Ascending aorta (tissue), 2 donors: ENCODE measurements at regions of chr16 and their contacts with region 1.

Region 1: DNA sequence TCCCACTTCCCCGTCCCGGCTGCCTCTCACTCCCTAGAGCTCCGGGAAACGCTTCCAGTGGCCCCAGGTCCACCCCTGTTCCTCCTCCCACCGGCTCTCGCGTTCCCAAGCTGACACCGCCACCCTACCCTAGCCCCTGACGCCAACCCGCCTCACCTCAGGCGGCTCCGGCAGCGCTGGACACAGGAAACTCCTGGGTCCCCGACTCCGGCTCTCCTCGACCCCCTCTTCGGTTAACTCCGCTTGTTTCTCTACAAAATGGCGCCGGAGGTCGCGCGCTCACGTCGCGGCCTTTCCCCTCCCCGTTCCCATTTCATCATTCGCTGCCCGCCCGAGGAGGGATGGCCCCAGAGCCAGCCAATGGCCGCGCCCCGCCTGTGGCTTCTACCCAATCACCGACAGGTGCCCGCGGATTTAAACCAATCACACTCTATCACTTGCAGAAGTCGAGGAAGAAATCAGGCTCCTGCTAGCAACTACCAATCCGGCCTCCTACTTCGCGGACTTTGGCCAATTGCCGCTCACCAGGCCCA is at the start of gene CNOT1:
- DNase-seq: peak; percentile 98 to 100
- H3K4me3 ChIP-seq: peak within 1 kb of the TSS; percentile 78 to 86
- H3K27ac ChIP-seq: peak within 1 kb of the TSS; percentile 98
- H3K4me1 ChIP-seq: peaks cover 0 to 6% of the 10 kb centered on the region in 2 donors
- H3K27me3 ChIP-seq: no peaks in the 10 kb centered on the region
- CTCF ChIP-seq: no peak
- total RNA-seq, gene CNOT1: 324 TPM

Region 2: GRCh38 chr16:57871456-57871855 is 758.2 kb before region 1 on chr16:
- intact Hi-C with region 1: no loop called
- DNase-seq: no peak
- H3K4me3 ChIP-seq: no peak overlapping the region
- H3K27ac ChIP-seq: no peak overlapping the region
- H3K4me1 ChIP-seq: no peaks in the 10 kb centered on the region
- H3K27me3 ChIP-seq: no peaks in the 10 kb centered on the region
- CTCF ChIP-seq: no peak

Region 3: GRCh38 chr16:58392215-58393137 is 237.2 kb before region 1 on chr16 and contains the start of gene GINS3:
- intact Hi-C with region 1: loop called (anchors 5 kb)
- DNase-seq: peak; percentile 12 to 93
- H3K4me3 ChIP-seq: peak within 1 kb of the TSS; percentile 87 to 92
- H3K27ac ChIP-seq: peak within 1 kb of the TSS; percentile 58 to 64
- H3K4me1 ChIP-seq: no peaks in the 10 kb centered on the region
- H3K27me3 ChIP-seq: no peaks in the 10 kb centered on the region
- CTCF ChIP-seq: no peak
- total RNA-seq, gene GINS3: 21.8 TPM

Region 4: DNA sequence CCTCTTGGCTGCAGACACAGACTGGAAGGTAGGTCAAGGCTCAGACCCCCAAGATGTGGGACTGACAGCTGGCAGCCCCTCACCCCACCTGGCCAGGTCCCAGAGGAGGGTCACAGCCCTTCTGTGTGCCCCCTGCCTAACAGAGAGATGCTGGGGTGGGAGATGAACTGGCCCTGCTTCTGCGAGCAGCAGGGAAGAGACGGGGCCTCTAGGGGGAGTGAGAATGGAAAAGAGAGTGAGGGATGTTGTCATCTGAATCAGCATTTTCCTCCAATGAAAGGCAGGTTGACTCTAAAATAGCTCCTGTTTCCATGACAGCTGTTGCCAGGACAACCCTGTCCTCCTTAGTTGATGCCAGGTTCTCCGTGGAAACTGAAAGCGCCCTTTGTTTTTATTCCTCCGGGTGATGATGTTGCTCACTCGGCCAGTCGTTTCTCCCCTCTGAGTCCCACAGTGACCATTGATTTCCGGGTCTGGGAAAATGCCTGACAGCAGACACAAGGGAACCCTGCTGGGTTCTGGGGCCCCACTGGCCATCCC is 134.6 kb before region 1 on chr16:
- intact Hi-C with region 1: loop called (anchors 5 kb)
- DNase-seq: peak; percentile 30 to 91
- H3K4me3 ChIP-seq: peak overlapping the region; percentile 11 to 44
- H3K27ac ChIP-seq: peak overlapping the region; percentile 63 to 66
- H3K4me1 ChIP-seq: peaks cover 0 to 4% of the 10 kb centered on the region in 2 donors
- H3K27me3 ChIP-seq: no peaks in the 10 kb centered on the region
- CTCF ChIP-seq: peak; percentile 21 to 56 (median 38)

Region 5: GRCh38 chr16:58515125-58515870 is 114.3 kb before region 1 on chr16 and contains the start of gene SETD6:
- intact Hi-C with region 1: loop called (anchors 2 kb)
- DNase-seq: peak; percentile 64 to 92
- H3K4me3 ChIP-seq: peak within 1 kb of the TSS; percentile 89 to 92
- H3K27ac ChIP-seq: peak within 1 kb of the TSS; percentile 73 to 79
- H3K4me1 ChIP-seq: peaks cover 6 to 13% of the 10 kb centered on the region in 2 donors
- H3K27me3 ChIP-seq: no peaks in the 10 kb centered on the region
- CTCF ChIP-seq: peak; percentile 20 to 31 (median 25)
- total RNA-seq, gene SETD6: 24.4 TPM

Region 6: GRCh38 chr16:58684354-58685083 is 54.9 kb after region 1 on chr16 and contains the start of gene SLC38A7:
- intact Hi-C with region 1: loop called (anchors 2 kb)
- DNase-seq: peak; percentile 43 to 90
- H3K4me3 ChIP-seq: peak within 1 kb of the TSS; percentile 81 to 86
- H3K27ac ChIP-seq: peak within 1 kb of the TSS; percentile 42 to 77
- H3K4me1 ChIP-seq: peaks cover 3 to 13% of the 10 kb centered on the region in 2 donors
- H3K27me3 ChIP-seq: no peaks in the 10 kb centered on the region
- CTCF ChIP-seq: no peak
- total RNA-seq, gene SLC38A7: 23.5 TPM

Region 7: GRCh38 chr16:58733671-58734458 is 104.2 kb after region 1 on chr16 and contains the start of gene GOT2:
- intact Hi-C with region 1: loop called (anchors 2 kb)
- DNase-seq: peak; percentile 28 to 88
- H3K4me3 ChIP-seq: peak within 1 kb of the TSS; percentile 85 to 93
- H3K27ac ChIP-seq: peak within 1 kb of the TSS; percentile 75 to 81
- H3K4me1 ChIP-seq: peaks cover 12 to 14% of the 10 kb centered on the region in 2 donors
- H3K27me3 ChIP-seq: no peaks in the 10 kb centered on the region
- CTCF ChIP-seq: peak; percentile 70 to 94 (median 88)
- total RNA-seq, gene GOT2: 48.7 TPM

Region 8: GRCh38 chr16:58999762-59000161 is 370.1 kb after region 1 on chr16:
- intact Hi-C with region 1: no loop called
- DNase-seq: no peak
- H3K4me3 ChIP-seq: no peak overlapping the region
- H3K27ac ChIP-seq: no peak overlapping the region
- H3K4me1 ChIP-seq: no peaks in the 10 kb centered on the region
- H3K27me3 ChIP-seq: no peaks in the 10 kb centered on the region
- CTCF ChIP-seq: no peak